OCI-LY7 (cell line): ENCODE measurements at regions of chr1 and their contacts with region 1.

Region 1: DNA sequence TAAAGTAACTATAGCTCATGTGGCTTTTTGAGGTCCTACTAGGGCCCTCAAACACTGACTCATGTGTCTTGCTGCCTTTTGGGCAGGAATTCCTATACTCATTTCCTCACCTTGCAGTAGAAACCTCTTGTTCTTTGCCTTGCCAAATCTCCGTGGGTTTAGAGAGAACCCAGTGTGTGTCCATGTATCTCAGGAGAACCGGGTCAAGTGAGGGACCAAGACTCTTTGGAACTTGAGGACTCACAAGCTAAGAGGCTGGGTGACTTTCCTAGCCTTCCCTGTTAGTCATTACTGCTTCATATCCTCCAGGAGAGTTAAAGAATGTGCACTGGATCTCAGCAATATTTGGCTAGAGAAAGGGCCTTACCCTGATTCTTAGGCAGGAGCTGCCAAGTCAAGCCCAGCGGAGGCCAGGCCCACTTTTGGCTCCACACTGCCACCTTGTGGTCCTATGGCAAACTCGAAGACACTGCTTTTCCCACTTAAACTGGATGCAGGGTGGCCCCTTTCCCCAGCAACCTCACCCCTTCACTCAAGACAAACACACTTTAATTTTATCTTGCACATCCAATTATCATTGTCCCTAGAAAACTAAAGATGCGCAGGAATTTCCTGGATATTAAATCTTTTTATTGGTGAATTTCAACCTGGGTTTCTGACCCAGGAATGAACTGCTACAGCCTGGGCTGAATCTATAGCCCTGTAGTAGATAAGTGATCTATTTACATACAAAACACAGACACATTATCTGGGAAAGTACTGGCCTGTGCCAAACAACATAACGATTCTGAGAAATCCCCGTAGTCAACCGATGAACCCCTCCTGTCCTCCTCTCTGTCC is 10.6 kb downstream of the AVPR1B start:
- DNase-seq: peak; percentile 85
- H3K4me3 ChIP-seq: no peak overlapping the region
- H3K27ac ChIP-seq: no peak overlapping the region
- H3K4me1 ChIP-seq: peaks cover 6% of the 10 kb centered on the region
- CTCF ChIP-seq: peak; percentile 97

Region 2: GRCh38 chr1:205791568-205792180 is 314.9 kb before region 1 on chr1:
- CTCF ChIA-PET with region 1: no interaction called
- POLR2A ChIA-PET with region 1: no interaction called
- intact Hi-C with region 1: loop called (anchors 5 kb)
- DNase-seq: peak; percentile 70
- H3K4me3 ChIP-seq: no peak overlapping the region
- H3K27ac ChIP-seq: no peak overlapping the region
- H3K4me1 ChIP-seq: peaks cover 18% of the 10 kb centered on the region
- CTCF ChIP-seq: peak; percentile 93

Region 3: DNA sequence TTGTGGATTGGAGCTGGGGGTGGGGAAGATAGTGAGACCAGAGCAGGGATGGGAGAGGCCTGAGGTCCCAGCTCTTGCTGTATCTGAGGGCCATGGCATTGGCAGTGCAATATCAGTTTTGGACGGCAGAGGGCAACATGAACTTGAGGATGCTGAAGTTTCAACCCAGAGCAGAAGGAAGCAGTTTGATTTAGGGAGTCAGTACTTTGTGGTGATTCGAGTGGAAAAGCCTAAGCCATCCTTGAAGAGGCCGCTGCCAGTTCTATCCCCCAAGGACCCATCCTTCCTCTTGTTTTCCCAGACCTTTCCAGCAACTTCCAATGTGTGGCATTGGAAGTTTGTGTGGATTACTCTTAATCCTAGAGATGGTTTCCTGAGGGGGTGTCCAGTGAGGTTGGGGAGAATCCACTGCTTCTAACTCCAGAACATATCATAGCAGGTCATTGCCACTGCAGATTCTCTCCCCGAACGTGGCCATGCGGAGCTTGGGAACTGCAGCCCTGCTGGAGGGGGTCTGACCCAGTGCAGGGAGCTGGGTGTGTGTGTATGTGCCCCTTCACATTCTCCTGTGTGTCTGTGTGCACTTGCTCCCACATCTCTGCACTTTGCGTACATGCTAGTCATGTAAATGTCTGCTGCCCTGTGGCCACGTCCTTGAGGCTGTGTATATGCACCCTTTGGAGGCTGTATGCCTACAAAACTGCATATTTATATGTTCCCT is 187.4 kb before region 1 on chr1:
- CTCF ChIA-PET with region 1: no interaction called
- POLR2A ChIA-PET with region 1: no interaction called
- intact Hi-C with region 1: loop called (anchors 1 kb)
- DNase-seq: peak; percentile 69
- H3K4me3 ChIP-seq: no peak overlapping the region
- H3K27ac ChIP-seq: no peak overlapping the region
- H3K4me1 ChIP-seq: no peaks in the 10 kb centered on the region
- CTCF ChIP-seq: peak; percentile 87

Region 4: GRCh38 chr1:205983925-205984725 is 122.4 kb before region 1 on chr1:
- CTCF ChIA-PET with region 1: interaction called, 13 read pairs
- POLR2A ChIA-PET with region 1: interaction called, 7 read pairs
- intact Hi-C with region 1: loop called (anchors 1 kb)
- DNase-seq: peak; percentile 72
- H3K4me3 ChIP-seq: no peak overlapping the region
- H3K27ac ChIP-seq: no peak overlapping the region
- H3K4me1 ChIP-seq: no peaks in the 10 kb centered on the region
- CTCF ChIP-seq: peak; percentile 91

Region 5: DNA sequence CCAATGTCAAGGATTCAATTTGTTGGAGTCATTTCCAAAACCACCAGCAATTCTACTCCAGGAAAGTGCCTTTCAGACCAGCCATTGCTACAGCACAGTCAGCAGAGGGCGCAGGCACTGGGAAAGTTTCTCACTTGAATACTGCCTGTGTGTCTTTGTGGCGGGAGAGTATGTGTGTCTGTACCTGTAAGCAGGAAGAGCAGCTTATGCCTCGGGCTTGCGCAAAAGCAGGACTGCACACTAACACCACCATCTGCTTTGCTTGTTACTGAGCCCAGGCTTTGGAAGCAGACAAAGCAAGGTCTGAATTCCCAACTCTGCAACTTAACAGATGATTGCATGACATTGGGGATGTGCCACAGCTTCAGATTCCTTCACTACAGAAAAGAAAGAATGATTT is 75.8 kb before region 1 on chr1:
- CTCF ChIA-PET with region 1: interaction called, 16 read pairs
- POLR2A ChIA-PET with region 1: interaction called, 3 read pairs
- intact Hi-C with region 1: loop called (anchors 1 kb)
- DNase-seq: peak; percentile 93
- H3K4me3 ChIP-seq: no peak overlapping the region
- H3K27ac ChIP-seq: peak overlapping the region; percentile 1
- H3K4me1 ChIP-seq: peaks cover 43% of the 10 kb centered on the region
- CTCF ChIP-seq: peak; percentile 99

Region 6: DNA sequence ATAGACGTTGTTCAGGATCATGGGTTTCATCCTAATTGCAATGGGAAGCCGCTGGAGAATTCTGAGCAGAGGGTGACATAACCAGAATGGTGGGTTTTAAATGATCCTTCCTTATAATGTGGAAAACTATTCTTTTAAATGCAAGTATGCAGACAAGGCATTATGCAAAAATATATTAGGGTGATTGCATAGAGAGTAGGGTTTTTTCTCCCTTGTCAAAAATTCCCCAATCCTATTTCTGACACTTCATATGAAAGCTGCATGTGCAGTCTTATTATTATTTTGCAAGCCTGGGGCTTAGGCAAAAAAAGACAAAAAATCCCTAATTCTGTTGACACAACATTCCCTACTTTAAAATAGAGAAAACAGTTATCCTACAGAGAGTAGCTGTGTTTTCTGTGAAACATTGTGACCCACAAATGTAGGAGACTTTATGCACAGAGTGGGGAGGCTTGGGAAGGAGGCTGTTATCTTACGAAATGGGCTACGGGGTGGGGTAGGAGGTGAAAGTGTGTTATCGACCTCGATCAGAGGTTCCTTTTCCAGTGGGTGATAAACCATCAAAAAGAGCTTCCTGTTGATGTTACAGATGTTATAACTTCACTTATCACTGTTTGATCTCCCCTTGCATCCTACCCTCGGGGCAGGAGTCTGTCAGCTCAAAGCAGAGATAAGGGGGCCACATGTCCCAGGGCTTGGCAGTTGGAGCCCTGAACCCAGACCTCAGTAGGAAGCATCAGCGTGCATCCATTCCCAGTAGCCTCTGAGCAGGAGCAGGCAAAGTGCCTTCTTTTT is 26.3 kb before region 1 on chr1:
- CTCF ChIA-PET with region 1: no interaction called
- POLR2A ChIA-PET with region 1: no interaction called
- intact Hi-C with region 1: no loop called
- DNase-seq: no peak
- H3K4me3 ChIP-seq: no peak overlapping the region
- H3K27ac ChIP-seq: no peak overlapping the region
- H3K4me1 ChIP-seq: no peaks in the 10 kb centered on the region
- CTCF ChIP-seq: no peak

Region 7: GRCh38 chr1:206094024-206094423 is 12.5 kb before region 1 on chr1:
- CTCF ChIA-PET with region 1: no interaction called
- POLR2A ChIA-PET with region 1: no interaction called
- intact Hi-C with region 1: no loop called
- DNase-seq: no peak
- H3K4me3 ChIP-seq: no peak overlapping the region
- H3K27ac ChIP-seq: no peak overlapping the region
- H3K4me1 ChIP-seq: no peaks in the 10 kb centered on the region
- CTCF ChIP-seq: no peak